ENCODE measurements at regions of chr17 and their contacts with region 1.

Region 1: GRCh38 chr17:32253117-32253611 is 12.5 kb upstream of the RHBDL3 start:
- DNase-seq: peak; percentile 72 to 95
- H3K4me3 ChIP-seq: no peak overlapping the region
- CTCF ChIP-seq: peak in 1 of 3 donors; percentile 88
- POLR2A ChIP-seq: no peak

Region 2: DNA sequence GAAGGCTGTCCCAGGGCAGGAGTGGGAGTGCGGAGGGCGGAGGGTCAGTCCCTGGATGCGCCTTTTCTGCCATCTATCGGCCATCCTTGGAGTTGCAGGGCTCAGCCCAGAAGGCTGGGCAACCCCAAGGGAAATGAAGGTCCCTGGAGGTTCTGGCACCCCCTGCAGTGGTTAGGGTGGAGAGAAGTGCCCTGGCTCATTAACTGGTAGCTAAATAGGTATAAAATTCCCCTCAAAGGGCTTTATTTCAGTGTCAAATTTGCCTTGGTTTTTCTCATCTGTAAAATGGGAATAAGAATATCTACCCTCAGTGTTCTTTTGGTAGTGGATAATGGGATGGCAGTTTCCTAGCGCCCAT is 66.4 kb after region 1 on chr17:
- intact Hi-C with region 1: loop called (anchors 5 kb)
- DNase-seq: peak; percentile 60 to 91
- H3K4me3 ChIP-seq: no peak overlapping the region
- CTCF ChIP-seq: peak in 1 of 3 donors; percentile 53
- POLR2A ChIP-seq: no peak

Measured in lower leg skin (tissue), 4 donors.